Activated CD4-positive, alpha-beta memory T cell treated with anti-CD3 and anti-CD28 coated beads, Interleukin-2, amount 10 ng/mL, durations not matched to agents 7 days and 5 days (primary cell): ENCODE measurements at regions of chr1 and their contacts with region 1.

Region 1: GRCh38 chr1:64823691-64824476 is 79.0 kb downstream of the RAVER2 start:
- DNase-seq: peak; percentile 61
- H3K4me3 Mint-ChIP-seq: no peak overlapping the region
- H3K27ac Mint-ChIP-seq: no peak overlapping the region
- H3K4me1 Mint-ChIP-seq: peaks cover 29% of the 10 kb centered on the region
- H3K27me3 Mint-ChIP-seq: peaks cover 2% of the 10 kb centered on the region

Region 2: GRCh38 chr1:64268653-64269557 is 555.0 kb before region 1 on chr1:
- CTCF ChIA-PET with region 1: interaction called, 10 read pairs
- POLR2A ChIA-PET with region 1: no interaction called
- DNase-seq: peak; percentile 59
- H3K4me3 Mint-ChIP-seq: no peak overlapping the region
- H3K27ac Mint-ChIP-seq: no peak overlapping the region
- H3K4me1 Mint-ChIP-seq: no peaks in the 10 kb centered on the region
- H3K27me3 Mint-ChIP-seq: peaks cover 9% of the 10 kb centered on the region